ENCODE measurements at regions of chr1 and their contacts with region 1.

Region 1: DNA sequence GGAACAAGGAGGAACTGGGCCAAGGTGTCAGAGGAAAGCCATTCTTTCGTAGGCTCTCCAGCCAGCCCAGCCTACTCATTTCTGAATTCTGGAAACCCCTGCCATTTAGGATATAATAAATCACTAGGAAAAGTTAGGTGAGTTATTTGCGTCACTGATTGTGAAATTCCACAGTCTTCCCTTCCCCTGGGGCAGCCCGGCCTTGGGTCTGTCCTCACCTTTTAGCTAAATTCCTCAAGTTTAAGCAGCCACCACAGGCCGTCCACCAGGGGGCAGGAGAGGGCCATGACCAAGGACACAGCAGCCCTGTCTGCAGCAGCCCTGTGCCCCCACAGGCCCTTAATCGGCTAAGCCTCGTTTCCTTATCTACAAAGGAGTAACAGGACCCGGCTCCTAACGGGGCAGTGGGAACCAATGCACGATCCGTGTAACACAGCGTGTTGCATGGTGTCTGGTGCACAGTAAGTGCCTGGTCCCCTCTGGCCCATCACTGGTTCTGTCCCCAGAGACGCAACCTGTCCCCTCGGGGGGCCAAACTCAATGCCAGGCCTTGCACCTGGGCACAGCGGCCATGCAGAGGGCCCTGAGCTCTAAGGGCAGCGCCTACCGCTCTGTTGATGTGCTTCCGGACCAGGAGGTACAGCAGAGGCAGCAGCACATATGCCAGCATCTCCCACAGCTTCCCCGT is 18.1 kb downstream of the GPR157 start:
- DNase-seq: peak; percentile 82 to 92
- ATAC-seq: peak; percentile 54

Region 2: GRCh38 chr1:9004700-9005394 is 106.0 kb before region 1 on chr1:
- intact Hi-C with region 1: no loop called
- DNase-seq: peak; percentile 70 to 87
- ATAC-seq: peak; percentile 71

Region 3: GRCh38 chr1:9194016-9194415 is 83.2 kb after region 1 on chr1:
- intact Hi-C with region 1: loop called in 1 of 2 experiments (anchors 5 kb)
- DNase-seq: no peak
- ATAC-seq: no peak